HEK293 (cell line): ENCODE measurements at regions of chr22 and their contacts with region 1.

Region 1: GRCh38 chr22:38766076-38766777 is 10.4 kb upstream of the SUN2 start:
- H3K4me3 ChIP-seq: no peak overlapping the region
- H3K27ac ChIP-seq: no peak overlapping the region
- H3K4me1 ChIP-seq: no peaks in the 10 kb centered on the region
- CTCF ChIP-seq: peak; percentile 73

Region 2: DNA sequence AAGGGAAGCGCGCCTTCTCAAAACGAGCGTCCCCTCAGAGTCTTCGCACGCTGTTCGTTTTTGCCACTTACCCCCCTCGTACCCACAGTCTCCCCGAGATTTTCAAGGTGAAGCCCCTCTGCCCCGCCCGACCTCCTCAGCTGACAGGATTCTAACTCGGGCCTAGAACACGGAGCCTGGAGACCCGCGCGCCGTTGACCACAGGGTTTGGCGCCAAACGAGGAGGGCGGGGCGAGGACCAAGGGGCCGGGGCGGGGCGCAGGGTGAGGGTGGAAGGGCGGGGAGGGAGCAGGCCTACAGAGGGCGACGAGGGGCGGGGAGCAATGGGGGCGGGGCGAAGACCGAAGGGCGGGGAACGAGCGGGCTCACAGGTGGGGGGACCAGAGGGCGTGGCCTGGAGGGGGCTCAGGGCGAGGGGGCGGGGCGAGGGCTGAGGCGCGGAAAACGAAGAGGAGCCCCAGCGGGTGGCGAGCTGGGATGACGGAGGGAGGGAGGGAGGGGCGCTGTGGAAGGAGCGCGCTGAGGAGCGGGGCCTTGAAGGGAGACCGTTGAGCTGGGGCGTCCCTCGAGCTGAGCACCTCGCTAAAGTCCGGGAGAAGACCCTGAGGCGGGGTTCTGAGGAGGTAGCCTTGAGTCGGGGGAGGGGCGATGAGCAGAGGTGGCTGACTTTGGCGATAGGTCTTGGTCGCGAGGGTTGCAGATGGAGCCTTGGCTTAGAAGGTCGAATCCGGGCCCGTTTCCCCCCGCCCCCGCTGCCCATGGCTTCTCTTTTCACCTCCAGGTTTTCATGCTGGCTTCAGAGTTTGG is 196.1 kb before region 1 on chr22 and contains the start of gene DMC1:
- CTCF ChIA-PET with region 1: no interaction called
- POLR2A ChIA-PET with region 1: no interaction called
- H3K4me3 ChIP-seq: peak within 1 kb of the TSS; percentile 62
- H3K27ac ChIP-seq: peak within 1 kb of the TSS; percentile 61
- H3K4me1 ChIP-seq: peaks cover 20% of the 10 kb centered on the region
- CTCF ChIP-seq: no peak

Region 3: GRCh38 chr22:38777087-38777671 is 11.0 kb after region 1 on chr22:
- CTCF ChIA-PET with region 1: interaction called, 43 read pairs
- POLR2A ChIA-PET with region 1: interaction called, 3 read pairs
- H3K4me3 ChIP-seq: no peak overlapping the region
- H3K27ac ChIP-seq: no peak overlapping the region
- H3K4me1 ChIP-seq: no peaks in the 10 kb centered on the region
- CTCF ChIP-seq: no peak

Region 4: GRCh38 chr22:38802671-38803121 is 36.5 kb after region 1 on chr22:
- CTCF ChIA-PET with region 1: interaction called, 11 read pairs
- POLR2A ChIA-PET with region 1: no interaction called
- H3K4me3 ChIP-seq: no peak overlapping the region
- H3K27ac ChIP-seq: no peak overlapping the region
- H3K4me1 ChIP-seq: no peaks in the 10 kb centered on the region
- CTCF ChIP-seq: no peak

Region 5: DNA sequence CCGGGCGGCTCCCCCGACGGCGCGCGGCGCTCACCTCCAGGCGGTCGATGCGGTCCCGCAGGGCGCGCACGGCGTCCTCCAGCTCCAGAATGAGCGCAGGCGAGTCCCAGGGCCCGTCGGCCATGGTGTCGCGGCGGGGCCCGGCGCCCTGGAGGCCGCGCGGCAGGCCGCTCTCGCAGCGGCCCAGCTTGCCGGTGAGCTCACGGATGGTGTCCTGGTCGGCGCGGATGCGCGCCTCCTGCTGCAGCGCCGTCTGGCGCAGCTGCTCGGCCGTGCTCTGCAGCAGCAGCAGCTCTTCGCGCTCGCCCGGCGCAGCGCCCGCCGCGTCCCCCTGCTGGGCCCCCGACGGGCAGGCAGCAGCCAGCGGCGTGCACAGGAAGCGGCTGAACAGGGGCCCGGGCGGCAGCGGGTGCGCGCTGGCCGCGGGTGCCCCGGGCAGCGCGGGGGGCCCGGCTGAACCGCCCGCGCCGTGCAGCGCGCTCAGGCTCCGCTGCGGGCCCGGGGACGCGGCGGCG is 77.0 kb after region 1 on chr22:
- CTCF ChIA-PET with region 1: interaction called, 38 read pairs
- POLR2A ChIA-PET with region 1: interaction called, 19 read pairs
- H3K4me3 ChIP-seq: peak overlapping the region; percentile 42
- H3K27ac ChIP-seq: peak overlapping the region; percentile 63; the same call in 1 of the 2 replicates
- H3K4me1 ChIP-seq: 0 out of 2 replicates have a peak, but pooled peaks cover 2% of the 10 kb centered on the region
- CTCF ChIP-seq: peak; percentile 40; the same call in 1 of the 2 replicates

Region 6: DNA sequence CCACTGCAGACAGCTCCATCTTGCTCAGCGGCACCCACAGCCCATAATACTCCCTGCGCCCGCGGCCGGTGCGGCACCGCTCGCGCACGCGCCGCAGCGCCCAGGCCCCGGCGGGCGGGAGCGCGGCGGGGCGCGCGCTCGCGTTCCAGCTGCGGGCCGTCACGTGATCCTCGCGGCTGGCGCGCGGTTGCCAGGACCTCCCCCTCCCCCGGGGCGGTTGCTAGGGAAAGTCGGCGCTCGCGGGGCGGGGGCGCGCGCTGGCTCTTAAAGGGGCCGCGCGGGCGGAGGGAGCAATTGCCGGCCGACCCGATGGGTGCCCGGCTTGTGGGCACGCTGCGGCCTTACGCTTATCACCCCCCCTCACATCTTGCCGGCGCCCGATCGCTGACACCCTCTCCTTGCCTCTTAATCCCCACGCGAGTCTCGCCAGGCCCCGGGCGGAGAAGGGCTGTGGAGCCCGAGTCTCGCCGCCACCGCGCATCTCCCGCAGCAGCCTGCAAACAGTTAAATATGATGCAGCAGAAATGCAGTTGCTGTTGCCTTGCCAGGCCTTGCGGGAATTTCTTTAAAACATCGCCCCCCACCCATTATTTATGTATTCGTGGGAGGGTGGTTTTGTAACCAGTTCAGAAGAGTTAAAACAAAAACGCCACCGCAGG is 106.1 kb after region 1 on chr22 and contains the start of gene CBX6:
- CTCF ChIA-PET with region 1: interaction called, 44 read pairs
- POLR2A ChIA-PET with region 1: interaction called, 4 read pairs
- H3K4me3 ChIP-seq: peak within 1 kb of the TSS; percentile 75
- H3K27ac ChIP-seq: peak within 1 kb of the TSS; percentile 84
- H3K4me1 ChIP-seq: peaks cover 15% of the 10 kb centered on the region
- CTCF ChIP-seq: no peak

Region 7: DNA sequence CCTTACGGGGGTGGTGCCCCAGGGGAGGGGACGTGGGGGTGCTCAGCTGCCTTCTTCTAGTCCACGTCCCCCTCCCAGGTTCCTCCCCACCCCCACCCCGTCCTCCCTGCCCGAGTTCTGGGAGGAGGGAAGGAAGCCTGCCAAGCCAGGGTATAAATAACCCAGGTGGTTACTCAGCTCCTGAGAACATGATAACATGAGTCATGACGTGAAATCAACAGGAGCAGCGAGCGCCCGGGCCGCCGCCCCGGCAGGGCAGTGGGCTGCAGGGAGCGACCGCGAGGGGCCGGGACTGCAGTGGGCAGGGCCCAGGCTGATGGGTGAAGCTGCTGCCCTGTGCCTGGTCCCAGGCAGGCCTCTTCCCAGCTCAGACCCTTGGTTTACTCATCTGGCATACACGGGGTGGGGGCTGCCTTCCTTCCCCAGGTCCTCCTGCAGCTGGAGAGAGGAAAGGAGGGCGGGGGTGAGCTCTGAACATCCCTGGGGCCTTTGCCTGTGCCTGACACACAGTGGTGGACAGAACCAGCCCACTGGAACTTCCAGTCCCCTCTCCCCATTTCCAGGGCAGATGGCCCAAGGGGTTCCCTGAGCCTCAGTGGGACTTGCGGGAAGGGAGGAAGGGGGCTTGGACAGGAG is 487.3 kb after region 1 on chr22:
- CTCF ChIA-PET with region 1: no interaction called
- POLR2A ChIA-PET with region 1: no interaction called
- H3K4me3 ChIP-seq: peak overlapping the region; percentile 14; the same call in 1 of the 2 replicates
- H3K27ac ChIP-seq: peak overlapping the region; percentile 12; the same call in 1 of the 2 replicates
- H3K4me1 ChIP-seq: peaks cover 11% of the 10 kb centered on the region
- CTCF ChIP-seq: no peak